Naive thymus-derived CD4-positive, alpha-beta T cell (primary cell): ENCODE measurements at regions of chr19 and their contacts with region 1.

Region 1: GRCh38 chr19:12287958-12288500 is 6.7 kb downstream of the ZNF44 start:
- DNase-seq: no peak
- ATAC-seq: no peak
- H3K4me3 ChIP-seq: no peak overlapping the region
- H3K4me3 Mint-ChIP-seq: peak overlapping the region in 5 of 10 donors; percentile 6 to 75 (median 48)
- H3K27ac ChIP-seq: peak overlapping the region; percentile 16
- H3K27ac Mint-ChIP-seq: peak overlapping the region; percentile 36 to 97 (median 70)
- H3K4me1 ChIP-seq: peaks cover 21 to 25% of the 10 kb centered on the region in 2 donors
- H3K4me1 Mint-ChIP-seq: peaks cover 25 to 71% (median 46%) of the 10 kb centered on the region in 7 donors
- H3K27me3 ChIP-seq: no peaks in the 10 kb centered on the region
- H3K27me3 Mint-ChIP-seq: no peaks in the 10 kb centered on the region

Region 2: DNA sequence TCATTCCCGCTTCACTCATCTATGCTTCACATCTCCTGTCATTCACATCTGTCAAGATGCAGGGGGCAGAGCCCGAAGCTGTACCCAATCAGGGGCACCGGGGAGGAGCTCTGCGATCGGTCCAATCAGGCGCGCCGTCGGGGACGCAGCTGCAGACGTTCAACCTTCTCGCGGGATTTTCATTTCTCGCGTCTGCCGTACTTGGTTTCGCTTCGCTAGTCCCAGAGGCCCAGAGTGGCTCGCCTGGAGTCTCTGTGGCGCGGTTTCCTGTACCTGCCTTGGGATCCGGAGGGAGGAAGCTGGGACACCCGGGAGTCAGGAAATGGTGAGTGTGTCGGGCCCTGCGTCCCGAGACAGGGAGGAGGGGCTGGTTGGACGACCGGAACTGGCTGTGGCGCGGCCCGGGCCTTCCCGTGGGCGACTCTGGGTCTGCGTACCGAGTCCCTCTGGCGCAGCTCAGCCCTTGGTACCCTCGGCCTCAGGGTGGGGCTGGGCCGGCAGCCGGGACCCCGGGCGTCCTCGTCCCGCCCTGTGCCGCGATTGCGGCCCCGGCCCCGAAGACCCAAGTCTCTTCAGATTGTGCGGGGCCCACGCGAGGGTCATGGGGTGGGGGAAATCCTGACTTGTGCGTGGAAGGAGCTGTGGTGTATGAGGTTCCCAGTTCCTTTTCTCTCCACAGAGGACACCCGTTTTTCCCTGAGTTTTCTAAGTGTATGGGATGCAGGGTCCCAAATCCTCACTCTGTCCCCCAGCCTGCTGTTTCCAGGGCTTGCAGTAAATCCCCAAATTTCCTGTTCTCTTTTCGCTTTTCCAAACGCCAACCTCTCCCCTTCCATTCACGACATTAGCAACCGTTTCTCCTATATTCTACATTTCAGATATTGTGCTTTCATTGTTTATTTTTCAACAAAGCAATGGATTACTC is 124.9 kb before region 1 on chr19 and contains the start of gene ZNF136:
- CTCF ChIA-PET with region 1: no interaction called
- POLR2A ChIA-PET with region 1: interaction called, 5 read pairs
- intact Hi-C with region 1: loop called in 1 of 2 experiments (anchors 1 kb)
- DNase-seq: peak; percentile 77 to 95 (median 91)
- ATAC-seq: peak; percentile 99
- H3K4me3 ChIP-seq: peak within 1 kb of the TSS; percentile 78
- H3K4me3 Mint-ChIP-seq: peak within 1 kb of the TSS; percentile 88 to 100 (median 98)
- H3K27ac ChIP-seq: peak within 1 kb of the TSS; percentile 96
- H3K27ac Mint-ChIP-seq: peak within 1 kb of the TSS; percentile 88 to 100 (median 98)
- H3K4me1 ChIP-seq: peaks cover 7 to 15% of the 10 kb centered on the region in 2 donors
- H3K4me1 Mint-ChIP-seq: peaks cover 28 to 64% (median 46%) of the 10 kb centered on the region in 7 donors
- H3K27me3 ChIP-seq: no peaks in the 10 kb centered on the region
- H3K27me3 Mint-ChIP-seq: no peaks in the 10 kb centered on the region
- total RNA-seq, gene ZNF136: 16.8 to 36.8 (median 31.1) TPM

Region 3: GRCh38 chr19:12244370-12244769 is 43.7 kb before region 1 on chr19:
- CTCF ChIA-PET with region 1: interaction called, 3 read pairs
- POLR2A ChIA-PET with region 1: no interaction called
- intact Hi-C with region 1: loop called in 1 of 2 experiments (anchors 5 kb)
- DNase-seq: no peak
- ATAC-seq: no peak
- H3K4me3 ChIP-seq: no peak overlapping the region
- H3K4me3 Mint-ChIP-seq: no peak overlapping the region
- H3K27ac ChIP-seq: no peak overlapping the region
- H3K27ac Mint-ChIP-seq: no peak overlapping the region
- H3K4me1 ChIP-seq: no peaks in the 10 kb centered on the region
- H3K4me1 Mint-ChIP-seq: peaks cover 0 to 5% (median 0%) of the 10 kb centered on the region in 7 donors
- H3K27me3 ChIP-seq: no peaks in the 10 kb centered on the region
- H3K27me3 Mint-ChIP-seq: no peaks in the 10 kb centered on the region